ENCODE measurements at regions of chr12 and their contacts with region 1.

Region 1: GRCh38 chr12:810671-811415 is 58.5 kb downstream of the WNK1 start:
- DNase-seq: no peak
- ATAC-seq: peak in 1 of 8 donors; percentile 34
- H3K4me3 ChIP-seq: no peak overlapping the region
- H3K27ac ChIP-seq: no peak overlapping the region
- H3K4me1 ChIP-seq: peaks cover 0 to 77% (median 54%) of the 10 kb centered on the region in 9 donors
- H3K27me3 ChIP-seq: no peaks in the 10 kb centered on the region
- CTCF ChIP-seq: no peak

Region 2: DNA sequence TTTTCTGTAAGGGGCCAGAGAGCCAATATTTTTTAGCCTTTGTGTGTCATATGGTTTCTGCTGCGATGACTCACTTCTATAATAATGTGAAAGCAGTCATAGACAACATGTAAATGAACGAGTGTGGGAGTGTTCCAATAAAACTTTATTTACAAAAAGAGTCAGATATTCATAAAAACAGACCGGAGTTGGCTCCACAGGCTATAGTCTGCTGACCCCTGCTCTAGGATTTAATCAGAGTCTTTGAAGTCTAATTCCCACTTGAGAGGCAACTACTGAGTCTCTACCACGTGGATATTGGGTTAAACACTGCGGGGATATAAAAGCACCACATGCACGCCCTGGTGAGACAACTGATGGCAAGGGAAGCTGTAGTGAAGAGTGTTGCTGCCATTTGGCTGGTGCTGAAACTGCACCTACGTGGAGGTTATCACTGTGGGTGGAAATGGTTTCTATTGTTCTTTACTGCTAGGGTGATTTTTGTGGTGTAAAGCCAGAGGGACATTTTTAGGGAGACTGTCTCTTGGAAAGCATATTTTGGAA is 144.0 kb before region 1 on chr12:
- intact Hi-C with region 1: no loop called
- DNase-seq: no peak
- ATAC-seq: no peak
- H3K4me3 ChIP-seq: no peak overlapping the region
- H3K27ac ChIP-seq: peak overlapping the region in 1 of 10 donors; percentile 2
- H3K4me1 ChIP-seq: peaks cover 12 to 47% (median 23%) of the 10 kb centered on the region in 9 donors
- H3K27me3 ChIP-seq: no peaks in the 10 kb centered on the region
- CTCF ChIP-seq: no peak

Region 3: GRCh38 chr12:761256-761655 is 49.6 kb before region 1 on chr12:
- intact Hi-C with region 1: loop called in 4 of 10 experiments (anchors 2 to 10 kb)
- DNase-seq: no peak
- ATAC-seq: no peak
- H3K4me3 ChIP-seq: no peak overlapping the region
- H3K27ac ChIP-seq: no peak overlapping the region
- H3K4me1 ChIP-seq: peaks cover 2 to 98% (median 68%) of the 10 kb centered on the region in 9 donors
- H3K27me3 ChIP-seq: no peaks in the 10 kb centered on the region
- CTCF ChIP-seq: no peak

Region 4: GRCh38 chr12:774051-774614 is 36.7 kb before region 1 on chr12:
- intact Hi-C with region 1: loop called in 2 of 10 experiments (anchors 5 to 10 kb)
- DNase-seq: no peak
- ATAC-seq: peak in 2 of 8 donors; percentile 16 to 33
- H3K4me3 ChIP-seq: no peak overlapping the region
- H3K27ac ChIP-seq: peak overlapping the region in 7 of 10 donors; percentile 18 to 59 (median 31)
- H3K4me1 ChIP-seq: peaks cover 0 to 94% (median 72%) of the 10 kb centered on the region in 9 donors
- H3K27me3 ChIP-seq: no peaks in the 10 kb centered on the region
- CTCF ChIP-seq: no peak

Region 5: GRCh38 chr12:1093166-1093751 is 282.4 kb after region 1 on chr12:
- intact Hi-C with region 1: loop called in 1 of 10 experiments (anchors 10 kb)
- DNase-seq: peak in 1 of 2 donors; percentile 51
- ATAC-seq: peak in 4 of 8 donors; percentile 56 to 77 (median 64)
- H3K4me3 ChIP-seq: no peak overlapping the region
- H3K27ac ChIP-seq: no peak overlapping the region
- H3K4me1 ChIP-seq: peaks cover 0 to 19% (median 7%) of the 10 kb centered on the region in 9 donors
- H3K27me3 ChIP-seq: no peaks in the 10 kb centered on the region
- CTCF ChIP-seq: peak; percentile 38 to 86 (median 72)

Region 6: DNA sequence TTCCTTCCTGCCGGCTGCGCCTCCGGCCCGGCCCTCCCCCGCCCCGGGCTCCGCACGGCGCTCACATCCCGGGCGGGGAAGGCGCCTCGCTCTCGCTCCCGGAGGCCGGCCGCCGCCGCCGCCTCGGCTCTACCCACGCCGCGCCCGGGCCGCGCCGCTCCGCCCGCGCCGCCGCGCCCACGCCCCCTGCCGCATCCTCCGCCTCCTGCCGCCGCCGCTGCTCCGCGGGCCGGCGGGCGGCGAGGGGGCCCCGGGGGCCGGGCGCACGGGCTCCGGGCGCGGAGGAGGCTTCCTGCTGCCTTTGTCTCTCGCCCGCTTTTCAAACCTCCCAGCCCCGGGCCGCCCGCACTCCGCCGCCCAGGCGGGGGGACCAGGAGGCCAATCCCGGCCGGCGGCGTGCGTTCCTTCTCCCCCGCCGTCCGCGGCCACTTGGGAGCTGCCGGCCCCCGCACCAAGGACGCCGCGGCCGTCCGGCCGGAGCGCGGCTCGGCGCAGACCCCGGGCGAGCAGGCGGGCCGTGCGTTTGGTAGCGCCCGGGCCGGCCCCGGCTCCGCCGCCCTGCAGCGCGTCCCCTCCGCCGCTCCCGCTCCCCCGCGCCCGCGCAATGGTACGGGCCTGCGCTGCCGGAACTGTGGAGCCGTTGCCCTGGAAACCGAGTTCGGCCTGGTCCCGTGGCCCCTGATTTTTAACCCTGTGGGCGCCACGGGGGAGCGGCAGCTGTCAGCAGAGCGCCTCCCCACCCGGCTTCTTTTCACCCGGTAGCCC is 783.6 kb after region 1 on chr12 and contains the start of gene FBXL14:
- intact Hi-C with region 1: loop called in 1 of 10 experiments (anchors 10 kb)
- DNase-seq: peak; percentile 91 to 94
- ATAC-seq: peak; percentile 81 to 88 (median 85)
- H3K4me3 ChIP-seq: peak within 1 kb of the TSS; percentile 74 to 98 (median 88)
- H3K27ac ChIP-seq: peak within 1 kb of the TSS; percentile 81 to 97 (median 92)
- H3K4me1 ChIP-seq: peaks cover 0 to 56% (median 51%) of the 10 kb centered on the region in 9 donors
- H3K27me3 ChIP-seq: no peaks in the 10 kb centered on the region
- CTCF ChIP-seq: peak in 1 of 9 donors; percentile 9
- total RNA-seq, gene FBXL14: 4.8 to 8.4 (median 7.0) TPM